ENCODE measurements at regions of chr9 and their contacts with region 1.

Region 1: DNA sequence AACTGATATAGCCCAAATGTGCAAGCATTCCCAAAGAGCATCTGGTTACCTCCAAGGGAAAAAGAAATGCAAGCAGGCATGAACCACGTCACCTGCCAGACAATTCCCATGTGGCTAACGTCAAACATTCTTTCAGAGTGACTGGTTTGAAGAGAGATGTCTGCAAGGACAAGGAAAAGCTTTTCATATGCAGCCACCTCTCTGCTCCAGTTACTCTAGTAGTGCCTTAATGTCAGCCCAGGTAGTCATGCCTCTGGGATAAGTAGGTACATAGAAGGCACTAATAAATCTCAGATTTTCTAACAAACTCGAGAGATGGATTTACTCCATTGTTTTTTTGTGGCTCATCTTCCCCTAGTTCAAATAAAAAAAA is 96.8 kb upstream of the IFNK start:
- DNase-seq: peak; percentile 88
- H3K4me3 ChIP-seq: peak overlapping the region in 1 of 3 experiments; percentile 37
- H3K27ac ChIP-seq: peak overlapping the region; percentile 86
- H3K4me1 ChIP-seq: peaks cover 80% of the 10 kb centered on the region
- H3K27me3 ChIP-seq: no peaks in the 10 kb centered on the region
- CTCF ChIP-seq: no peak

Region 2: GRCh38 chr9:27385606-27386322 is 41.5 kb before region 1 on chr9:
- CTCF ChIA-PET with region 1: no interaction called
- dilution Hi-C with region 1: loop called (anchors 5 kb)
- in situ Hi-C with region 1: no loop called
- intact Hi-C with region 1: loop called (anchors 5 kb)
- DNase-seq: peak; percentile 57
- H3K4me3 ChIP-seq: no peak overlapping the region
- H3K27ac ChIP-seq: peak overlapping the region; percentile 13
- H3K4me1 ChIP-seq: peaks cover 43% of the 10 kb centered on the region
- H3K27me3 ChIP-seq: no peaks in the 10 kb centered on the region
- CTCF ChIP-seq: no peak

Region 3: GRCh38 chr9:27394154-27394825 is 33.0 kb before region 1 on chr9:
- CTCF ChIA-PET with region 1: interaction called, 4 read pairs
- dilution Hi-C with region 1: loop called (anchors 5 kb)
- in situ Hi-C with region 1: no loop called
- intact Hi-C with region 1: loop called (anchors 5 kb)
- DNase-seq: no peak
- H3K4me3 ChIP-seq: no peak overlapping the region
- H3K27ac ChIP-seq: peak overlapping the region; percentile 67
- H3K4me1 ChIP-seq: peaks cover 36% of the 10 kb centered on the region
- H3K27me3 ChIP-seq: no peaks in the 10 kb centered on the region
- CTCF ChIP-seq: no peak

Region 4: DNA sequence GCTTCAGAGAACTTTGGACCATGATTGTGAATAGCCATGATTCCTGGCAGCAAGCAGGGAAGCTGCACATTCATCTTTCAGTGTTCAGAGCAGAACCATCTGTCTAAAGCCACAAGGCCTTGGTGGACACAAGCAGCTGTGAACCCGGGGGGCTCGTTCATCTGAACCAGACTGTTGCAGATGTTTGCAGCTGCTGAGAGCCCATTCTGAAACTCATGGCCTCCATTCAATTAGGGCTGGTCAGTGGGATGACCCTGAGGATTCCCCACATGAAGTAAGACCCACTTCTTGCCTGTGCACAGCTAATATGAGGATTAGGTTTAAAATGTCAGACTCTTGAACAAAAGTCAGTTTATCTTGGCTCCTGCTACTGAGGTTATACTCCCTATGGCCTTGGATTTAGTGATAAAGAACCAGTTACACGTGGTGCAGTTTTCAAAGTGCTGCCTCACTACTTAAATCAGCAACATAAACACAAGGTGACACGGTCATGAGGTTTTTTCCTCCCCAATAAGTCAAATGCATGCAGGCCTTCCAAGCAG is 13.0 kb before region 1 on chr9:
- CTCF ChIA-PET with region 1: no interaction called
- dilution Hi-C with region 1: no loop called
- in situ Hi-C with region 1: no loop called
- intact Hi-C with region 1: loop called (anchors 2 kb)
- DNase-seq: no peak
- H3K4me3 ChIP-seq: peak overlapping the region in 2 of 3 experiments; percentile 41 to 60
- H3K27ac ChIP-seq: peak overlapping the region; percentile 48
- H3K4me1 ChIP-seq: peaks cover 20% of the 10 kb centered on the region
- H3K27me3 ChIP-seq: no peaks in the 10 kb centered on the region
- CTCF ChIP-seq: no peak

Region 5: GRCh38 chr9:27499481-27499880 is 72.2 kb after region 1 on chr9:
- CTCF ChIA-PET with region 1: no interaction called
- dilution Hi-C with region 1: no loop called
- in situ Hi-C with region 1: no loop called
- intact Hi-C with region 1: loop called (anchors 5 kb)
- DNase-seq: peak; percentile 91
- H3K4me3 ChIP-seq: peak overlapping the region in 2 of 3 experiments; percentile 15 to 23
- H3K27ac ChIP-seq: peak overlapping the region; percentile 86
- H3K4me1 ChIP-seq: peaks cover 48% of the 10 kb centered on the region
- H3K27me3 ChIP-seq: no peaks in the 10 kb centered on the region
- CTCF ChIP-seq: no peak

Region 6: GRCh38 chr9:27519466-27520465 is 92.5 kb after region 1 on chr9:
- CTCF ChIA-PET with region 1: interaction called, 7 read pairs
- dilution Hi-C with region 1: loop called (anchors 5 kb)
- in situ Hi-C with region 1: loop called in 1 of 2 experiments (anchors 10 kb)
- intact Hi-C with region 1: no loop called
- DNase-seq: peak; percentile 91
- H3K4me3 ChIP-seq: no peak overlapping the region
- H3K27ac ChIP-seq: peak overlapping the region; percentile 92
- H3K4me1 ChIP-seq: peaks cover 51% of the 10 kb centered on the region
- H3K27me3 ChIP-seq: no peaks in the 10 kb centered on the region
- CTCF ChIP-seq: no peak